Adrenal gland (tissue), 19 donors: ENCODE measurements at regions of chr16 and their contacts with region 1.

Region 1: DNA sequence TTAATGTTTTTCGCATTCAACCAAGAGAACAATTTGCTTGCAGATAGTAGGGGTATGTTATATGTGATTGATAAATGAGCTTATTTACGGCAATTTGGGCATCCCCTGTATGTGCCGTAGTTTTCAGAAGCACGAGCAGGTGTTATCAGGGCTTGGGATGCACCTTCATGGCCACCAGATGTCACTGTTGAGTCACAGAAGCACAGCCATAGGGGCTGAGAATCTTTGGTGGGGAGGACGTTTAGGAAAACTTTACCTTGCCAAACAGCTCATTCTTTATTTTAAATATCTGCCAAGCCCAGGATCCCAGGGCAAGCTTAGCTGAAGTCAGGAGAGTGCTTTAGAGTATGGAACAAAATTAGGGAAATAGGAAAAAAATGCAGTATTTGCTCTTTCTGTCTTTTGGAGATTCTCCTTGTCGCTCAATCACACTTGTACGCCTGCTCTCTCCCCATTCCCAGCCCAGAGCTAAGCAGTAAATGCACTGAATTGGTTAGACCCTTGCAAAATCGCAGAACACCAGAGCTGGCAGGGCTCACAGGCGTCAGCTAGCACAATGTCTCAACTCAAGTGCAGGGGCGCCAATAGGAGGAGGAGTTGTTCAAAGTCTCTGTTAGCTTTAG is 93.6 kb upstream of the MPHOSPH6 start:
- DNase-seq: peak; percentile 27 to 80 (median 49)
- H3K4me3 ChIP-seq: no peak overlapping the region
- H3K27ac ChIP-seq: no peak overlapping the region
- H3K4me1 ChIP-seq: no peaks in the 10 kb centered on the region
- H3K27me3 ChIP-seq: no peaks in the 10 kb centered on the region
- CTCF ChIP-seq: peak; percentile 68 to 94 (median 82)
- POLR2A ChIP-seq: no peak

Region 2: DNA sequence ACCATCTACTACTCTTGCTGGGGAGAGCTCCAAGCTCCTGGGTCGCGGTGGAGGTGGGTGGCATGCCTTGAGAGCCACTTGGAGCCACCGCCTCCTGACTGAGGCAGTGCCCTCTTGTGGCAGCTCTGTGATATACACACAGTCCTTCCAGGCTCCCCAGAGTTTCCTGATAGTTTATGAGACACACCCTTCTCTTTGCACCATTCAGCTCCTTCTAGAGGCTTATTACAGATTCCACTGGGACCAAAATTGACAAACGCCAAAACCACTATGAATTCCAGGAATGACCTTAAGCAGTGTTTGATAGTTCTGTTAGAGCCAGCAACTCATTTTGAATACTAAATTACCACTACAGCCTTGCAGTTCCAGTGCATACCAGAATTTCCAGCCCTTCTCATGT is 193.1 kb after region 1 on chr16:
- intact Hi-C with region 1: loop called in 1 of 2 experiments (anchors 10 kb)
- DNase-seq: peak; percentile 22 to 70 (median 49)
- H3K4me3 ChIP-seq: no peak overlapping the region
- H3K27ac ChIP-seq: no peak overlapping the region
- H3K4me1 ChIP-seq: no peaks in the 10 kb centered on the region
- H3K27me3 ChIP-seq: no peaks in the 10 kb centered on the region
- CTCF ChIP-seq: peak; percentile 51 to 67 (median 61)
- POLR2A ChIP-seq: no peak

Region 3: GRCh38 chr16:83215406-83216001 is 951.9 kb after region 1 on chr16:
- intact Hi-C with region 1: loop called in 1 of 2 experiments (anchors 10 kb)
- DNase-seq: peak in 5 of 7 donors; percentile 13 to 41 (median 20)
- H3K4me3 ChIP-seq: no peak overlapping the region
- H3K27ac ChIP-seq: no peak overlapping the region
- H3K4me1 ChIP-seq: no peaks in the 10 kb centered on the region
- H3K27me3 ChIP-seq: no peaks in the 10 kb centered on the region
- CTCF ChIP-seq: peak; percentile 36 to 69 (median 56)
- POLR2A ChIP-seq: no peak